Mucosa of descending colon (tissue), 3 donors: ENCODE measurements at regions of chr6 and their contacts with region 1.

Region 1: DNA sequence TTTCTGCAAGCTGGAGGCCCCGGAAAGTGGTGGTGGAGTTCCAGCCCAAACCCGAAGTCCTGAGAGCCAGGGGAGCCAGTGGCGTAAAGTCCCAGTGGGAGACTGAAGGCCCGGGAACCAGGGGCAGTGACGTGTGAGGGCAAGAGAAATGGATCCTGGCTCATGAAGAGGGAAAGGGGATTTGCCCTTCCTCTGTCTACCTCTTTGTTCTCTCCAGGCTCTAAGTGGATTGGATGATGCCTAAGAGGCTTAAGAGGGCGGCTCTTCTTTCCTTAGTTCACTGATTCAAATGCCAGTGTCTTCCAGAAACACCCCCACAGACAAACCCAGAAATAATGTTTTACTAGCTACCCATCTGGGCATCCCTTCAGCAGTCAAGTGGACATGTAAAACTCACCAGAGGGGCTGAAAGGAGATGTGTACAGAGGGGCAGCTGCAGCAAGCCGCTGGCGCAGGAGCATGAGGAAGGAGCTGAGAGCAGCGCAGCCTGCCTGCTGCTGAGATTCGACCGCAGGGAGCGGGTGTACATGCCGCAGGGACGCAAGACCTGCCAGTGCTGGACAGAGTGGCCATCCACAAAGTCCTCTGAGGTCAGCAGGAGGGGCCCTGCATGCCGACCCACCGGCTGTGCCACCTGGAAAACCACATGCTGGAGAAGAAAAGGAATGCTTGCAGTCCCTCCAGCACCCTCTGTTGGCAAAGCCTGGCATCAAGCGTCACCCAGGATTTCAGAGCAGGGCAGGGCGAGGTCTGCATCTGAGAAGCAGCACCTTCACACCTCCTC is 29.5 kb downstream of the CDYL start:
- DNase-seq: peak; percentile 66 to 86 (median 82)
- ATAC-seq: peak; percentile 71
- H3K4me3 ChIP-seq: no peak overlapping the region
- H3K4me1 ChIP-seq: peaks cover 33% of the 10 kb centered on the region
- CTCF ChIP-seq: peak; percentile 53

Region 2: GRCh38 chr6:4936681-4937041 is 130.9 kb after region 1 on chr6:
- intact Hi-C with region 1: loop called in 1 of 2 experiments (anchors 10 kb)
- DNase-seq: peak in 1 of 3 donors; percentile 33
- ATAC-seq: peak; percentile 64
- H3K4me3 ChIP-seq: no peak overlapping the region
- H3K4me1 ChIP-seq: peaks cover 3% of the 10 kb centered on the region
- CTCF ChIP-seq: no peak